Right ventricle myocardium superior (tissue), 1 donor: ENCODE measurements at regions of chr20 and their contacts with region 1.

Region 1: DNA sequence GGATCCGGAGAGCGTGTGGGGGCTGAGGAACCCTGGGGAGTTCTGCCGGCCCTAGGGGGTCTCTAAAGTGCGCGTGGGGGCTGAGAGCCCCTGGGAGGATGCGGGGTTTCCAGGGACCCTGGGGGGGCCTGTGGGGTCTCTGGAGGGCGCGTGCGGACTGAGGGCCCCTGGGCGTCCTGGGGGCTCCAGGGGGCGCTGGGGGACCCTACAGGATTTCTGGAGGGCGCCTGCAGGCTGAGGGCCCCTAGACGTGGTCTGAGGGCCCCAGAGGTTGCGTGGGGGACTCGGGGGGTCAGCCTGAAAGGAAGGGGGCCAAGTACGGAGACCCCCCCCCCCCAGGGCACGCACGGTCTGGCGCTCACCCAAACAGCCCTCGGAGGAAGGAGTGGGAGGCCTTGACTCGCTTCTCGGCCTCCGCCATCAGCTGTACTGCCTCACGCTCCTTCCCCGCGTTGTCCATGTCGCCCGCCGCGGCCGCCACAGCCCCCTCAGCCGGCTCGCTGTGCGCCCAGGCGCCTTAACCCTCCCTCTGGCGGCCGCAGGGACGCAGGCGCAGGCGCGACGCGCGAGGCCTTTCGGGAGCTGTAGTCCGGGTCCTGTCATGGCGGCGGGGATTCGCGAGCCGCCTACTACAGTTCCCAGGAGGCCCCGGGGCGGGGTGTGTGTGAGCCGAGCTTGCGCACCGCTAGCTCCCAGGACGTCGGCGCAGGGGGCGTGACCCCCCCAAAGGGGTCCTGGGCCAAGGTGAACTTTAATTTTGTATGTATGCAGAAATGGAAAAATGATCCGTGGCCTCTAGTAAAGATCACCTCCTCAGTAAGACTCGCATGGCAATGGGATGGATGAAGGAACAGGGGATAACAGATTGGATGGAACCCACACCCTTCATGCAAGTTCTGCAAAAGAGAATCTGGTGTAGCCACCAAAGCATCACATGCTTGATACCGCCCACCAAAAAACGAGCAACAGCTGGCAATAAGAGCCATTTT is at the start of gene NAPB:
- DNase-seq: peak; percentile 98
- ATAC-seq: peak; percentile 99
- total RNA-seq, gene NAPB: 4.2 TPM

Region 2: GRCh38 chr20:23361598-23362384 is 59.4 kb before region 1 on chr20 and contains the start of gene GZF1:
- intact Hi-C with region 1: loop called (anchors 5 kb)
- DNase-seq: peak; percentile 99
- ATAC-seq: peak; percentile 90
- total RNA-seq, gene GZF1: 16.6 TPM

Region 3: DNA sequence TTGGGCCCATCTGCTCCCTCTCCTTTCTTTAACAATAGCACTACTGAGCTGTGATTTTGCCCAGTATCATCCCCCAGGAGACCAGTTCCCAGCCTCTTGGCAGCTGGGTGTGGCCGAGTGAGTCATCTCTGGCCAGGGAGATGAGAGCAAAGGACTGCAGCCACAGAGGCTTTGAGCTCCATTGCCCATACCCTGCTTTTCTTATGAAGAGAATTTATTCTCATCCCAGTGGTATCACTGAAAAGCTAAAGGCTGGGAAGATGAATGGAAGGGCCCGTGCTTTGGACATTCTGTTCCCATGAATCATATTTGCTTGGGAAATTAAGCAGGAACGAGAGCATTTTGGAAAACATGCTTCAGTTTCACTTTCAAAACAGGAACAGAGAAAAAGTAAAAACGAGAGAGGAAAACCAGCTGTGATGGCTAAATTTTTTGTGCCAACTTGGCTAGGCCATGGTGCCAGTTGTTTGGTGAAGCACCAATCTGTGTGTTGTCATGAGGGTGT is 201.7 kb after region 1 on chr20:
- intact Hi-C with region 1: no loop called
- DNase-seq: peak; percentile 83
- ATAC-seq: peak; percentile 96